GM12878 (cell line): ENCODE measurements at regions of chr12 and their contacts with region 1.

Region 1: GRCh38 chr12:10749700-10750384 is 26.7 kb upstream of the YBX3 start:
- DNase-seq: peak; percentile 68
- ATAC-seq: peak; percentile 99
- H3K4me3 ChIP-seq: peak overlapping the region; percentile 33; the same call in 1 of the 2 replicates
- H3K27ac ChIP-seq: no peak overlapping the region
- H3K4me1 ChIP-seq: no peaks in the 10 kb centered on the region
- H3K27me3 ChIP-seq: no peaks in the 10 kb centered on the region; a peak in 1 of 4 replicates
- CTCF ChIP-seq: peak; percentile 84 to 98 (median 96); a peak in 5 of 6 replicates
- EP300 ChIP-seq: no peak
- POLR2A ChIP-seq: no peak
- RAD21 ChIP-seq: peak; percentile 91

Region 2: DNA sequence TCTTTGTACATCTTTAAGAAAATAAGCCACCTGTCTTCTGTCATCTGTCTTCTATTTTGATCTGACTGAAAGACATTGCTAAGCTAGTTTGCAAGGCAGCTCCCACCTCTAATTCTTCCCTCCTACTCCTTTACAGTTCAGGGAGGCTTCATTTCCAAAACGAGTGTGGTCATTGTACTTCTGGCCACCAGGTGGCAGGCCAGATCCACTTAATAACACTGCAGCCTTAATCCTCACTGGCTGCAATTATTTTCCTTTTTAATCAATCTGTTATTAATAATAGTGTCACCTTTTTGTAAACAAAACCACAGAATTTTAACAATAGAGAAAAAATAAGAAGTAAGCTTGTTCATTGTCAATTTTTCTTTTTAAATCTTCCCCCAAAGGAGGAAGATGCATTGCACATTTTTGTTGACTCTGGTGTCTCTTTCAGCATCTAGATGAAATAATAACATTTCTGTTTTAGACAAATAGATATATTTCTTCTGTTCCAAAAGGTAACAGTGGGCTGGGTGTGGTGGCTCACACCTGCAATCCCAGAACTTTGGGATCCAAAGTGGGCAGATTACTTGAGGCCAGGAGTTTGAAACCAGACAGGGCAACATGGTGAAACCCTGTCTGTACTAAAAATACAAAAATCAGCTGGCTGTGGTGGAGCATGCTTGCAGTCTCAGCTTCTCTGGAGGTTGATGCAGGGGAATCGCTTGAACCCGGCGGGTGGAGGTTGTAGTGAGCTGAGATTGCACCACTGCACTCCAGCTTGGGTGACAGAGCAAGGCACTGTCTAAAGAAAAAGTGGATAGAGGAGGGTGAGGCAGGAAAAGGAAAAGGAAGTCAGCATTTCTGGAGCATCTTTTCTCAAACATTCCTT is 513.8 kb before region 1 on chr12:
- CTCF ChIA-PET with region 1: interaction called, 3 read pairs
- POLR2A ChIA-PET with region 1: no interaction called
- RAD21 ChIA-PET with region 1: no interaction called
- SMC1A ChIA-PET with region 1: interaction called, 4 read pairs
- in situ Hi-C with region 1: loop called (anchors 5 kb)
- intact Hi-C with region 1: loop called (anchors 1 kb)
- DNase-seq: no peak
- ATAC-seq: peak; percentile 73
- H3K4me3 ChIP-seq: no peak overlapping the region
- H3K27ac ChIP-seq: no peak overlapping the region
- H3K4me1 ChIP-seq: 0 out of 2 replicates have a peak, but pooled peaks cover 4% of the 10 kb centered on the region
- H3K27me3 ChIP-seq: no peaks in the 10 kb centered on the region; a peak in 1 of 4 replicates
- CTCF ChIP-seq: peak; percentile 66 to 80 (median 70)
- EP300 ChIP-seq: no peak
- POLR2A ChIP-seq: no peak
- RAD21 ChIP-seq: peak; percentile 94

Region 3: GRCh38 chr12:10562306-10562933 is 187.4 kb before region 1 on chr12:
- CTCF ChIA-PET with region 1: interaction called, 8 read pairs
- POLR2A ChIA-PET with region 1: no interaction called
- RAD21 ChIA-PET with region 1: interaction called, 4 read pairs
- SMC1A ChIA-PET with region 1: interaction called, 6 read pairs
- in situ Hi-C with region 1: no loop called
- intact Hi-C with region 1: loop called (anchors 5 kb)
- DNase-seq: no peak
- ATAC-seq: peak; percentile 39; the same call in 2 of the 3 replicates
- H3K4me3 ChIP-seq: no peak overlapping the region
- H3K27ac ChIP-seq: no peak overlapping the region
- H3K4me1 ChIP-seq: peaks cover 4% of the 10 kb centered on the region
- H3K27me3 ChIP-seq: no peaks in the 10 kb centered on the region
- CTCF ChIP-seq: peak; percentile 45 to 69 (median 56); a peak in 5 of 6 replicates
- EP300 ChIP-seq: no peak
- POLR2A ChIP-seq: no peak
- RAD21 ChIP-seq: peak; percentile 96

Region 4: GRCh38 chr12:10673660-10674384 is 76.0 kb before region 1 on chr12 and contains the start of gene STYK1:
- CTCF ChIA-PET with region 1: interaction called, 9 read pairs
- POLR2A ChIA-PET with region 1: no interaction called
- RAD21 ChIA-PET with region 1: interaction called, 7 read pairs
- SMC1A ChIA-PET with region 1: interaction called, 12 read pairs
- in situ Hi-C with region 1: no loop called
- intact Hi-C with region 1: no loop called
- DNase-seq: peak; percentile 24
- ATAC-seq: peak; percentile 84
- H3K4me3 ChIP-seq: peak within 1 kb of the TSS; percentile 32
- H3K27ac ChIP-seq: no peak within 1 kb of the TSS
- H3K4me1 ChIP-seq: peaks cover 14% of the 10 kb centered on the region; the same call in 1 of the 2 replicates
- H3K27me3 ChIP-seq: peaks cover 0 to 2% of the 10 kb centered on the region in 2 experiments; a peak in 1 of 4 replicates
- CTCF ChIP-seq: peak; percentile 81 to 87 (median 83)
- EP300 ChIP-seq: no peak
- POLR2A ChIP-seq: no peak
- RAD21 ChIP-seq: peak; percentile 83
- polyA plus RNA-seq, gene STYK1: 0.73 to 0.87 TPM

Region 5: DNA sequence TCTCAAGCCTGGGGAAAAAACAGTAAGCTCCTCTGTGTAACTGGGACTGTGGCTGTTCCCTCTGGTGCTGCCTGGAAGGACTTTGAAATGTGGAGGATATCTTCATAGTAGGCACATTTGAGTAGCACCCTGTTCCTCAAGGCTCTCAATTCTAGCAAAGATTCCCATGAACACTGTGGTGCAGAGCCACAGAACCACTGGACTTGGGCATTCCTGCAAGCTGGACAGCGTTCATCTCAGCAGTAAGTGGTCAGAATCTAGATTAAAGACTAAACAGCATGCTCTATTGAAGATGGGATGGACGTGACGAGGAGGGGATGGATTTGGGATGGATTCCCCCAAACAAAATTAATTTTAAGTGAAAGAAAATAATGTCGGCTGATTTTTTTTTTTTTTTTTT is 17.3 kb before region 1 on chr12:
- CTCF ChIA-PET with region 1: interaction called, 46 read pairs
- POLR2A ChIA-PET with region 1: no interaction called
- RAD21 ChIA-PET with region 1: interaction called, 4 read pairs
- SMC1A ChIA-PET with region 1: interaction called, 19 read pairs
- in situ Hi-C with region 1: no loop called
- intact Hi-C with region 1: no loop called
- DNase-seq: no peak
- ATAC-seq: no peak
- H3K4me3 ChIP-seq: no peak overlapping the region
- H3K27ac ChIP-seq: no peak overlapping the region
- H3K4me1 ChIP-seq: no peaks in the 10 kb centered on the region
- H3K27me3 ChIP-seq: peaks cover 0 to 1% of the 10 kb centered on the region in 2 experiments; a peak in 2 of 4 replicates
- CTCF ChIP-seq: no peak
- EP300 ChIP-seq: no peak
- POLR2A ChIP-seq: no peak
- RAD21 ChIP-seq: no peak

Region 6: DNA sequence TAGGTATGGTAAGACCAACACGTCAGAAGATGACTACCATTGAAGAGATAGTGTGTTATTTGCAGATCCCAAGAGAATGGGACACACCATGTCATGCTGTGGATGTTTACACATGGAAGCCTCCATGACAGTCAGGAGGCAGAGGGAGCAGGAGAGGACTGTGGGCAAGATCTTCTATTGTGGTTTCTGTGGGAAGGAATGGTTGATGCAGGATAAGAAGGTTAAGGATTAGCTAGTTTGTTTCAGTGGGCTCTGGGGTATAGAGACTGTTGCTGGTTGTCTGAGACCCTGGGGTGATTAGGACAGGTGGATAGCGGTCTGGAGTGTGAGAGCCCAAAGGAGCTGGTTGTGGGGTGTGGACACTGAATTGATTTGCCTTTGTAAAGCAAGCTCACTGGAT is 29.3 kb after region 1 on chr12:
- CTCF ChIA-PET with region 1: interaction called, 10 read pairs
- POLR2A ChIA-PET with region 1: no interaction called
- RAD21 ChIA-PET with region 1: no interaction called
- SMC1A ChIA-PET with region 1: interaction called, 5 read pairs
- in situ Hi-C with region 1: no loop called
- intact Hi-C with region 1: no loop called
- DNase-seq: no peak
- ATAC-seq: no peak
- H3K4me3 ChIP-seq: no peak overlapping the region
- H3K27ac ChIP-seq: no peak overlapping the region
- H3K4me1 ChIP-seq: no peaks in the 10 kb centered on the region
- H3K27me3 ChIP-seq: no peaks in the 10 kb centered on the region
- CTCF ChIP-seq: no peak
- EP300 ChIP-seq: no peak
- POLR2A ChIP-seq: no peak
- RAD21 ChIP-seq: no peak